A549 (cell line): ENCODE measurements at regions of chr9 and their contacts with region 1.

Region 1: DNA sequence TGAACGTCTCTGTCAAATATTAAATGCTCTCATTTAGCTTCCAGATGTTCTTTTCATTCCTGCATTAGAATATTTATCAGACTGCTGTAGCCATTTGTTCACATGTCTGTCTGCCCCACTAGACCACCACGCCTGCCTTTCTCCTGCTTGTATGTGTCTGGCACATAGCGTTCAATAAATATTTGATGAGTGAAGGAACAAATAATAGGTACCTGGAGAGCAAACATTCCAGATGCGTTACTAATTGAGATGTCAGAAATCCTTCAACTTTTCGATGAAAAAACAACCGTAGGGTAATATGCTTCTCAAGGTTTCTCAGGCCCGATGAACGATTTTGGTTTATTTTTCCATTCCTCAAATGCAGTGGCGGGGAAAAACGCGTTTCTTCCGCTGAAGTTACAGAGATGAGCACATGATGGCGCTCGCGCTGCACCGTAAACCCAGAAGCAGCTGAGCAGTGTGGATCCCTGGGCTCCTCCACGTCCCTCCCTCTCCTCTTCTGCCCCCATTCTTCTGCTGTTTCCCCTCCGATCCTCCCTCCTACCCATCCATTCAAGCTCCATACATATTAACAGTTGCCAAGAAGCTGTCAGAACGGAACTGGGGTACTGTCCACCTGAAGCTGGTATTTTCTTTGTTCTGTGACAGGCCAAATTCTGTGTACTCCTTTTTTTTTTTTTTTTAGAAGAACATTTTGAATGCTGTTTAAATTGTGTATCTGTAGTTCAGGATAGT is 245.4 kb downstream of the MPDZ start:
- DNase-seq: peak; percentile 56 to 71
- ATAC-seq: peak; percentile 82 to 98
- H3K4me3 ChIP-seq: peak overlapping the region; percentile 21; the same call in 1 of the 3 replicates
- H3K27ac ChIP-seq: peak overlapping the region; percentile 24 to 33; a peak in 1 of 6 replicates
- H3K4me1 ChIP-seq: peaks cover 7% of the 10 kb centered on the region; the same call in 1 of the 3 replicates
- CTCF ChIP-seq: peak; percentile 85
- EP300 ChIP-seq: no peak
- POLR2A ChIP-seq: no peak
- RAD21 ChIP-seq: peak; percentile 90 to 93

Region 2: GRCh38 chr9:12933957-12934356 is 100.2 kb before region 1 on chr9:
- CTCF ChIA-PET with region 1: no interaction called
- POLR2A ChIA-PET with region 1: no interaction called
- DNase-seq: peak in 1 of 2 experiments; percentile 44
- ATAC-seq: peak in 1 of 2 experiments; percentile 49; a peak in 2 of 6 replicates
- H3K4me3 ChIP-seq: no peak overlapping the region
- H3K27ac ChIP-seq: no peak overlapping the region
- H3K4me1 ChIP-seq: peaks cover 7% of the 10 kb centered on the region; the same call in 1 of the 3 replicates
- CTCF ChIP-seq: no peak
- EP300 ChIP-seq: no peak
- POLR2A ChIP-seq: no peak
- RAD21 ChIP-seq: no peak

Region 3: DNA sequence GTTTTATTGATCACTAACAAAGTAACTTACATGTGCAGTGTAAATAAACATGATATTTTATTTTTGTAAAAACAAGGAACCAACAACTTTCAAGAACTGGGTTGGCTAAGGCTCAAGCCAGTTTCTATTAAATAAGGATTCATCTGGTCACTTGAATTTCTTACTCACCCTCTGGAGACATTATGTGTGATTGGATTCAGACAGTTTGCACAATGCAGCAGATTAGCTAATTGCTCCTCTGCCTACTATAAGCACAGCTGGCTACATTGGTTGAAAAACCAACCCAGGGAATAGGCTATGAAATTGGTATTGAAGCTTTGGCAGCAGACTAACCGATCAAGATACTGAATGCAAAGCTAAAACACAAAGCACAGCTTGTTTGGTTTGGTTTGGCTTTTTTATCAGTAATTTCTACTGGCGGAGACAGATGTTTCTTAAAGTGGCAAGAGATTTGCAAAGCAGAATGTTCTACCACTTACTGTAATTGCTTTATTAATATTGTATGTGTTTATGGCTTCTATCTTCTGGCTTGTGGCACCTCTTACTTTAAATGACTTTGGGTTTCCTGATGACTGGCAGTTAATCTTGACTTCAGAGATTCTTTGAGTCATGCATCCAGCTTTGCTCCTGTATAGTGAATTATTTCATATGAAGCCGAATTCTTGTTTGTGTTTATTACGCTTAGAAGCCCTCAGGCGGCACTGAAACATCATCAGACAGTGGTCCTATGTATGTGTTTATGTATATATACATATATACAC is 13.9 kb after region 1 on chr9:
- CTCF ChIA-PET with region 1: interaction called, 20 read pairs
- POLR2A ChIA-PET with region 1: no interaction called
- DNase-seq: no peak
- ATAC-seq: no peak
- H3K4me3 ChIP-seq: no peak overlapping the region
- H3K27ac ChIP-seq: no peak overlapping the region
- H3K4me1 ChIP-seq: no peaks in the 10 kb centered on the region
- CTCF ChIP-seq: no peak
- EP300 ChIP-seq: no peak
- POLR2A ChIP-seq: no peak
- RAD21 ChIP-seq: no peak

Region 4: DNA sequence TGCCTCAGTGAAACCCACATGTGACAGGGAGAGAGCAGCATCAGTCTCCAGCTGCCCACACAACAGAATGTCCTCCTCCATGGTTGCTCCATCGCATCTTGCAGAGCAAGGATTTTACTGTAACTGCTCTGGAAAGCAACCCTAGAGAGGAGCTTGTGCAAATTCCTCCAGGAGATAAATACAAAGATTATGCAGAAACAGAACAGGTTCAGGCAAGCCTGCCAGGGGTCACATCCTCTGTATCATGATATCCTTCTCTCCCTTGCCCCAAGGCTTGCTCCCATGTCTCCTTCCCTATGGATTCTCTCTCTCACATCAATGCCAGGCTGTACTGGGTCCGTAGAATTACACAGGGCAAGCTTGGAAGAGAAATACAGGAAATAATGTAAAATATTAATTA is 19.4 kb after region 1 on chr9:
- CTCF ChIA-PET with region 1: interaction called, 12 read pairs
- POLR2A ChIA-PET with region 1: no interaction called
- DNase-seq: no peak
- ATAC-seq: no peak
- H3K4me3 ChIP-seq: no peak overlapping the region
- H3K27ac ChIP-seq: no peak overlapping the region
- H3K4me1 ChIP-seq: no peaks in the 10 kb centered on the region
- CTCF ChIP-seq: no peak
- EP300 ChIP-seq: no peak
- POLR2A ChIP-seq: no peak
- RAD21 ChIP-seq: no peak

Region 5: GRCh38 chr9:13070612-13071595 is 36.8 kb after region 1 on chr9:
- CTCF ChIA-PET with region 1: no interaction called
- POLR2A ChIA-PET with region 1: no interaction called
- DNase-seq: no peak
- ATAC-seq: no peak
- H3K4me3 ChIP-seq: no peak overlapping the region
- H3K27ac ChIP-seq: no peak overlapping the region
- H3K4me1 ChIP-seq: no peaks in the 10 kb centered on the region
- CTCF ChIP-seq: no peak
- EP300 ChIP-seq: no peak
- POLR2A ChIP-seq: no peak
- RAD21 ChIP-seq: no peak

Region 6: DNA sequence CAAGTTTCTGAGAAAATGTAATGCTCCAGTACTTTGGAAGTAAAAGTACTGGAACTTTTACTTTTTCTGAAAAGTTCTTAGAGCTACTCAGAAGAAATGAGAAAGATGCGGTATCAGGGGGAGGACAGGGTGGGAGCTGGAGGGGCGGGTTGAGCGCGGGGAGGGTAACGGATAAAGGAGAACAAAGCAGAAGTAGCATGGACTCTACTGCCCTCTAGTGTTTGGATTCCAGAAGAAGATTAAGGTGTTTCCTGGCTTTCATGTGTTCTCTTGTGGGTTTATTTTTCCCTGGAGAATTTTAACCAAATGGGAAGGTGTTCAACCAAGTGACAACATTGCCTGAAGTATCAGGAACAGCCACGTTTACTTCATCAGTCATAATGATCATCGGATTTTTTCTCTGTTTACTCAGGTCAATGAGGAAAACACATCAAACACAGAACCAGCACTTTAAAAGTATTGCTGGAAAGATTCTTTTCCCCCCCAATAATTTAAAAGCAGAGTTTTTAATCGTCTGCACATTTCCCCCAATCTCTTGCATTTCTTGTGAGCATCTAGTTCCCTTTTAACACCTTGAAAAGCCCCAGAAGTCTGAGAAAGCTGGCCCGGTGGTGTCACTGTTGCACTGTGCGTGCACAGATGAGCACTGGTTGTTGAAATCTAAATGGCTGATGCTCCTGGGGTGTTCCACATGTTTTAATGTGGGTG is 54.7 kb after region 1 on chr9:
- CTCF ChIA-PET with region 1: interaction called, 40 read pairs
- POLR2A ChIA-PET with region 1: no interaction called
- DNase-seq: peak; percentile 57 to 70
- ATAC-seq: peak; percentile 86 to 91
- H3K4me3 ChIP-seq: 0 out of 3 replicates have a peak overlapping the region, but pooled peaks have one; percentile 11
- H3K27ac ChIP-seq: no peak overlapping the region
- H3K4me1 ChIP-seq: no peaks in the 10 kb centered on the region
- CTCF ChIP-seq: peak; percentile 89
- EP300 ChIP-seq: no peak
- POLR2A ChIP-seq: no peak
- RAD21 ChIP-seq: peak; percentile 78 to 84